A673 (cell line): ENCODE measurements at regions of chr3 and their contacts with region 1.

Region 1: DNA sequence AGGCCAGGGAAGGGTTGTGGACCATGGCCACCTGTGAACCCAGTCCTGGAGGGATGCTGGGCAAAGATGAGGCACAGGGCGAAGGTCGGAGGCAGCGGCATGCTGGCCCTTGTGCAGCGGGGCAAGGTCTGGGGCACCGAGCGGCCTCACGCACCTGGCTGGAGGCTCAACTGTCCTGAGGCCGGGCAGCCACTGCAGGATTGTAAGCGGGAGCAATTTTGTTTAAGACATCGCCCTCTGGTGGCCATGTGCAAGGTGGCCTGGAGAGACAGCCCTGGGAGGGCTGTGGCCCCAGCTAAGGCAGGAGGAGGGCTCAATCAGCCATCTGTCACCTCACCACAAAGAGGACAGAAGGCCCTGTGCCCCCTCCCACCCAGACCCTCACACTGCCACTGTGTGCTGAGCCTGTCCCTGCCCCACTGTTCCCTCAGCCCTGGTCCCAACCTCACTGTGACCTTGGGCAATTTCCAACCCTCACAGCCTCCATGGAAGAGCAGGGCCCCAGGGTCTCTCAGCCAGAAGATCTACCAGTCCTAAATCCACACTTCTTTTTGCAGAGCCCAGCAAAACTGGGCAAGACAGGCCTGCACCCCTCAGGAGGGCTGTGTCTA is 46.2 kb downstream of the TPRA1 start:
- DNase-seq: peak; percentile 70
- H3K4me3 ChIP-seq: no peak overlapping the region
- H3K27ac ChIP-seq: no peak overlapping the region
- H3K4me1 ChIP-seq: peaks cover 8% of the 10 kb centered on the region
- H3K27me3 ChIP-seq: peaks cover 3% of the 10 kb centered on the region
- CTCF ChIP-seq: peak; percentile 81

Region 2: GRCh38 chr3:125957674-125958510 is 1586.4 kb before region 1 on chr3:
- CTCF ChIA-PET with region 1: interaction called, 10 read pairs
- POLR2A ChIA-PET with region 1: no interaction called
- intact Hi-C with region 1: no loop called
- DNase-seq: peak; percentile 33
- H3K4me3 ChIP-seq: peak overlapping the region; percentile 31
- H3K27ac ChIP-seq: no peak overlapping the region
- H3K4me1 ChIP-seq: no peaks in the 10 kb centered on the region
- H3K27me3 ChIP-seq: peaks cover 25% of the 10 kb centered on the region
- CTCF ChIP-seq: no peak

Region 3: GRCh38 chr3:126522363-126522788 is 1021.9 kb before region 1 on chr3:
- CTCF ChIA-PET with region 1: no interaction called
- POLR2A ChIA-PET with region 1: no interaction called
- intact Hi-C with region 1: loop called (anchors 5 kb)
- DNase-seq: peak; percentile 73
- H3K4me3 ChIP-seq: no peak overlapping the region
- H3K27ac ChIP-seq: no peak overlapping the region
- H3K4me1 ChIP-seq: peaks cover 6% of the 10 kb centered on the region
- H3K27me3 ChIP-seq: peaks cover 6% of the 10 kb centered on the region
- CTCF ChIP-seq: peak; percentile 83

Region 4: DNA sequence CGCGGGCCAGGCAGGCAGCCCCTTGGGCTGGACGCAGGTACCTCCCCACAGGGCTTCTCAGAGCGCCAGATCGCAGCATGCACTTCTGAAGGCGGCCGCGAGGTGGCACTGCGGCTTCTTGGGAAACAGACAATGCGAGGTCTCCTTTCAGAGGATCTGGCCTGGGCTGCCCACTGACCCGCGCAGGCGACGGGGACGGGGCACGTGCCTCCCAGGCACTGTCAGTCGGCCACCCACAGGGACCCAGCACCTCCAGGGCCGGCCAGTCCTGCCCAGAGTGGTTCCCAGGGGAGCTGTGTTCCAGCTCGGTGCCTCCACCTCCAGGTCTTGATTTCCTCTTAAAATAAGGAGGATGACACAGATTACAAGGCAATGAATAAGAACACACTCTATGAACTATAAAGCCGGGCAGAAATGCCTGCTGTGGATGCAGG is 865.0 kb before region 1 on chr3:
- CTCF ChIA-PET with region 1: interaction called, 4 read pairs
- POLR2A ChIA-PET with region 1: no interaction called
- intact Hi-C with region 1: loop called (anchors 2 kb)
- DNase-seq: peak; percentile 81
- H3K4me3 ChIP-seq: peak overlapping the region; percentile 7
- H3K27ac ChIP-seq: no peak overlapping the region
- H3K4me1 ChIP-seq: peaks cover 20% of the 10 kb centered on the region
- H3K27me3 ChIP-seq: no peaks in the 10 kb centered on the region
- CTCF ChIP-seq: peak; percentile 95

Region 5: DNA sequence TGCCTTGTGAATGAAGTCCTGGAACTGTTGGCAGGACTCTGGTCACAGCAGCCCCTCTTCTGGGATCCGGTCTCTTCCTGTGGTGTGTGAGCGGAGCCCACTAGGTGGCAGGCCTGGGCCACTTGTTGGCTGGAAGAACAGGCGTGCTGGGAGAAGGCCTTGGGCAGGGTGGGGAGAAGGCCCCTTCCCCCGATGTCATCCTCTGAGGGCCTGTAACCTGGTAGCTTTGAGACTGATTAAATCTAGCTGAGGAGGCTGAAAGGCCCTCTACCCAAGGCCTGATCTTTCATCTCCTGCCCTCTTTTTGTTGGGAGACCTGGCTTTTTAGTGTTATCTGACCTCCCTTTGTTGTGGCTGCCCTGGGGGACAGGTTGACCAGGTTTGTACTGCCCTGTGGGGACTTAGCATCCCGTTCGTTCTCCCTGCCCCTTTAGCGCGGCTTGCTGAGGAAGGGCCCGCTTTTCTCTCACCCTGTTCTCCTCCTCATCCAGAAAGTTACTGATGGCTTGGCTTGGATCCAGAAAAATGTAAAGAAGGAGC is 791.9 kb before region 1 on chr3:
- CTCF ChIA-PET with region 1: interaction called, 3 read pairs
- POLR2A ChIA-PET with region 1: no interaction called
- intact Hi-C with region 1: loop called (anchors 5 kb)
- DNase-seq: peak; percentile 84
- H3K4me3 ChIP-seq: no peak overlapping the region
- H3K27ac ChIP-seq: no peak overlapping the region
- H3K4me1 ChIP-seq: no peaks in the 10 kb centered on the region
- H3K27me3 ChIP-seq: no peaks in the 10 kb centered on the region
- CTCF ChIP-seq: peak; percentile 93